Activated CD8-positive, alpha-beta T cell treated with anti-CD3 and anti-CD28 coated beads for 36 hours (primary cell): ENCODE measurements at regions of chr5 and their contacts with region 1.

Region 1: DNA sequence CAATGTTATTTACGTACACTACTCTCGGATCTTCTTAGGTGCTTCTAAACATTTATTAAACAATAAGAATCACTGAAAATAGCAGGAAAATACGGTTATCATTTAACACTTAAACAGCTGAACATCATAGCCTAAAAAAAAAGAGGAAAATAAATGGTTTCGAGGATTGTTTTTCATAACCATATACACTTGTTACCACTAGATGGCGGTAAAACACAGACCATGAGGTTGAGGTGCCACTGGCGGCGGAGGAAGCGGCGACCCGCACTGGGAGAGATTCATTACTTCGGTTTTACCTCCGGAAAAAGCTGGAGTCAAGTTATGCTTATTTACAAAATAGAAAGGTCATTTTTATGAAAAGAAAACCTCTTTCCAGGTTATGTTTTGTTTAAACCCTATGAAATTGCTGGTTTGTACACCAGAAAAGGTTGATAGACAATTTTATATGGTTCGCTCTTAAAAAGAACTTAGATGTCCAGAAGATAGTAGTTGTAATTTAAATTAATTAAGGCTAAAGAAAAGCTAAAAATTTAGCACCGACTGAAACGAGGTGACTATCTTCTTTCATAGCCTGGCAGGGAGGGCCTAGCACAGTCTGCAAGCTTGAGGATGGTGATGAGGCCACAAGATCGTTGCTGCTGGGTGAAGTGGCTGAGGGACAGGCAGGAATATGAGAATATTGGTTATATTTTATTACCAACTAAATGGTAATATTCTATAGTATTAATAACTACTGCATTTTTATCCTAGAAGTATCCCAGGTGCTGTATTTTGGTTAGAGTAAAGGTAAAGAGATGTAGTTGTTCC is 605.7 kb downstream of the RAB3C start:
- DNase-seq: peak; percentile 73
- ATAC-seq: peak; percentile 75
- H3K4me3 Mint-ChIP-seq: no peak overlapping the region
- H3K27ac Mint-ChIP-seq: no peak overlapping the region
- H3K4me1 Mint-ChIP-seq: peaks cover 3% of the 10 kb centered on the region
- H3K27me3 Mint-ChIP-seq: peaks cover 10% of the 10 kb centered on the region
- CTCF ChIP-seq: peak; percentile 90

Region 2: DNA sequence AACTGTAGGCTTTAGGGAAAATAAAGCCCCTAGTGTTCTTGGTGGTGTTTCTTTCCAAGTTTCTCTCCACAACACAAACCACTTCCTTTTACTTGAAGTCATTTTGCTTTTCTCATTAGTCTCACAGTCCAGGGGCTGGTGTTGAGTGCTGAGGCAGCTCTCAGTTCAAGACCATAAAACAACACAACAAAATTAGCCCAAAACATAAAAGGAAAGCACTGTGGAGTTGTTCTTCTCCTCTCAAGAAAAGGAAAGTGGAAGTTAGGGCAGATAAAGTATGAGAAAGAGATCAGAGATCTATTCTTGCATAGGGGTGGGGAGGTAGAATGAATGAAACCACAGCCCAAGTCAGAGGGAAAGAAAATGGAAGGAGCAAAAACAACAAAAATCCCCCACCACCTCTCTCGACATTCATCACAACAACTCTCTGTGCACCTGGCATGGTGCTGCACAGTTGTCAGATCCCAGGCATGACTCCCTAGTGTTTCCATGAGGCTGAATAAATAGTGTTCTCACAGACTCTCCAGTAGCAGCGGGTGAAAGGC is 35.8 kb before region 1 on chr5:
- CTCF ChIA-PET with region 1: no interaction called
- POLR2A ChIA-PET with region 1: no interaction called
- intact Hi-C with region 1: no loop called
- DNase-seq: peak; percentile 14
- ATAC-seq: peak; percentile 72
- H3K4me3 Mint-ChIP-seq: no peak overlapping the region
- H3K27ac Mint-ChIP-seq: no peak overlapping the region
- H3K4me1 Mint-ChIP-seq: peaks cover 6% of the 10 kb centered on the region
- H3K27me3 Mint-ChIP-seq: no peaks in the 10 kb centered on the region
- CTCF ChIP-seq: no peak

Region 3: GRCh38 chr5:59216841-59217240 is 28.2 kb after region 1 on chr5:
- CTCF ChIA-PET with region 1: interaction called, 16 read pairs
- POLR2A ChIA-PET with region 1: no interaction called
- intact Hi-C with region 1: no loop called
- DNase-seq: no peak
- ATAC-seq: no peak
- H3K4me3 Mint-ChIP-seq: no peak overlapping the region
- H3K27ac Mint-ChIP-seq: no peak overlapping the region
- H3K4me1 Mint-ChIP-seq: no peaks in the 10 kb centered on the region
- H3K27me3 Mint-ChIP-seq: peaks cover 22% of the 10 kb centered on the region
- CTCF ChIP-seq: no peak

Region 4: DNA sequence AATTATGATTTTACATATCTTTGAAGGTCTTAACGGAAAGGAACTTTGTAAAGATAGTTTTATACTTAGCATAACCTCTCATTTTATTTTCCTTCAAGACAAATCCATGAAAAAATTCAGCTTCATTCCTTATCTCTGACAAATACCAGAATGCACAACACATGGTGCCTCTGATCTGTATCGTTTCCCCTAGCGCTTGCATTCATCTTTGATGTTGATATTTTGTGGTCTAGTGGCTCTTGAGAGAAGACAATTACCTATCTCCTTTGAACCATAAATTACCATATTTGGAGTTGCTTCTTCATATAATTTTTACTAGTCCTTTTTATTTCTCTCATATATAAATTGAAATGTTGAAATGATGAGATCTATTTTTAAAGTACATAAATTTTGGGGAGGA is 153.6 kb after region 1 on chr5:
- CTCF ChIA-PET with region 1: interaction called, 15 read pairs
- POLR2A ChIA-PET with region 1: no interaction called
- intact Hi-C with region 1: no loop called
- DNase-seq: no peak
- ATAC-seq: no peak
- H3K4me3 Mint-ChIP-seq: no peak overlapping the region
- H3K27ac Mint-ChIP-seq: no peak overlapping the region
- H3K4me1 Mint-ChIP-seq: no peaks in the 10 kb centered on the region
- H3K27me3 Mint-ChIP-seq: peaks cover 7% of the 10 kb centered on the region
- CTCF ChIP-seq: no peak

Region 5: DNA sequence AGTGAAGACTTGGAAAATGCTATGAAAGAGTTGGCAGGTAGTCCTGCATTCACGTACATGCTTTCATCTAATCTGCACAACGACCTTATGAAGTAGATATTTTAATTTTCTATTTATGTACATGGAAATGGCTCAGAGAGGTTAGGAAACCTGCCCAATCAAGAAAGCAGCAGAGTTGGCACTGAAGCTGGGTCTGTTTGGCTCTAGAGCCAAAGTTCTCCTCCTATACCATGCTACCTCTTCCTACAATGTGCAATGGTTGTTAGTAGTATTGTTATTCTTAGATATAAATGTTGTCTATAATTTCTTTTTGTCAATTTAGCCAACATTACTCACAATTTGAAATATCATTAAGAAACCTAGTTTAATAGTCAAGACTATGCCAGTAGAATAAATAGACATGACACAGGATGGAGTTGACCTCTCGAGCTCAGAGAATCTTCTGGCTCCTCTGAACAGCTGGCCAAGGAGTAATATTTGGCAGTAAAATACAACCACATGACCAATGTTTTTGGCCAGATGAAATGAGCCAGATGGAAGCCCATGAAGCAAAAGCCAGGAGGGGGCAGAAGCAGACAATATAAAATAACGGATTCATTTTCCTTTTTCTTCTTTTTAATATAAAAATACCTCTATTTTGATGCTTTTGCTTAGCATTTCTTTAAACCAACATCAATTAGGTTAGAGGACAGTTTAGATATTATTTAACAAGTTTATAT is 162.6 kb after region 1 on chr5:
- CTCF ChIA-PET with region 1: interaction called, 14 read pairs
- POLR2A ChIA-PET with region 1: no interaction called
- intact Hi-C with region 1: no loop called
- DNase-seq: no peak
- ATAC-seq: no peak
- H3K4me3 Mint-ChIP-seq: no peak overlapping the region
- H3K27ac Mint-ChIP-seq: no peak overlapping the region
- H3K4me1 Mint-ChIP-seq: no peaks in the 10 kb centered on the region
- H3K27me3 Mint-ChIP-seq: peaks cover 9% of the 10 kb centered on the region
- CTCF ChIP-seq: no peak

Region 6: GRCh38 chr5:59358005-59358861 is 169.6 kb after region 1 on chr5:
- CTCF ChIA-PET with region 1: interaction called, 129 read pairs
- POLR2A ChIA-PET with region 1: no interaction called
- intact Hi-C with region 1: no loop called
- DNase-seq: no peak
- ATAC-seq: no peak
- H3K4me3 Mint-ChIP-seq: no peak overlapping the region
- H3K27ac Mint-ChIP-seq: no peak overlapping the region
- H3K4me1 Mint-ChIP-seq: no peaks in the 10 kb centered on the region
- H3K27me3 Mint-ChIP-seq: peaks cover 7% of the 10 kb centered on the region
- CTCF ChIP-seq: no peak

Region 7: GRCh38 chr5:59367791-59368394 is 179.3 kb after region 1 on chr5:
- CTCF ChIA-PET with region 1: interaction called, 129 read pairs
- POLR2A ChIA-PET with region 1: no interaction called
- intact Hi-C with region 1: loop called (anchors 5 kb)
- DNase-seq: peak; percentile 66
- ATAC-seq: no peak
- H3K4me3 Mint-ChIP-seq: no peak overlapping the region
- H3K27ac Mint-ChIP-seq: no peak overlapping the region
- H3K4me1 Mint-ChIP-seq: peaks cover 3% of the 10 kb centered on the region
- H3K27me3 Mint-ChIP-seq: peaks cover 10% of the 10 kb centered on the region
- CTCF ChIP-seq: peak; percentile 75

Region 8: DNA sequence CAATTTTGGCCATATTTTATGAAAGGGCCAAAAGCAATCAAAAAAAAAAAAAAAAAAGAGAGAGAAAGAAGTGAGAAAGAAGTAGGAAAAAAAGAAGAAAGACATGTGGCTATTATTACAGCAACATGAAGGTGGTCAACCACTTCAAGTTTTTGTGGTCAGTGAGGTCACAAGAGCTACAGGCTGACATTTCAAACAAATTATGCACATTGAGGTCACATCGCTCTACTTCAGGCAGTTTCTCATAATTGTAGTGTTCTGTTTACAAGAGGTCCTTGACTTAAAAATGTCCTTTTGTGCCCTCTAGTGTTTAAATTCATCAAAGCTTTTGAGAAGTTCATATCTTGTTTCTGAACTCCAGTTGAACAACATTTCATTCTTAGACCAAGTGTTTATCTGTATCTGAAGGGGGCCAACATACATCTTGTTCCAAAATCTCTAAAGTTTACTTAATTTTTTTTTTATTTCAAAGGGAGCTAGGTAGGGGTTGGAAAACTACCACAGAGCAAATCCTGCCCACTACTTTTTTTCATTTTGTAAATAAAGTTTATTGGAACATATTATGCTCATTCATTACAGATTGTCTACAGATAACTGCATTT is 191.8 kb after region 1 on chr5:
- CTCF ChIA-PET with region 1: interaction called, 88 read pairs
- POLR2A ChIA-PET with region 1: interaction called, 3 read pairs
- intact Hi-C with region 1: loop called (anchors 2 kb)
- DNase-seq: peak; percentile 69
- ATAC-seq: peak; percentile 89
- H3K4me3 Mint-ChIP-seq: no peak overlapping the region
- H3K27ac Mint-ChIP-seq: no peak overlapping the region
- H3K4me1 Mint-ChIP-seq: peaks cover 4% of the 10 kb centered on the region
- H3K27me3 Mint-ChIP-seq: peaks cover 4% of the 10 kb centered on the region
- CTCF ChIP-seq: peak; percentile 72